Naive thymus-derived CD4-positive, alpha-beta T cell (primary cell): ENCODE measurements at regions of chr16 and their contacts with region 1.

Region 1: GRCh38 chr16:90022209-90023064 is 3.2 kb upstream of the DBNDD1 start:
- DNase-seq: peak; percentile 51 to 89 (median 71)
- ATAC-seq: peak; percentile 80
- H3K4me3 ChIP-seq: peak overlapping the region; percentile 73
- H3K4me3 Mint-ChIP-seq: peak overlapping the region; percentile 75 to 82 (median 80)
- H3K27ac ChIP-seq: peak overlapping the region; percentile 69
- H3K27ac Mint-ChIP-seq: peak overlapping the region; percentile 67 to 84 (median 79)
- H3K4me1 ChIP-seq: peaks cover 11 to 31% of the 10 kb centered on the region in 2 donors
- H3K4me1 Mint-ChIP-seq: peaks cover 15 to 37% (median 28%) of the 10 kb centered on the region in 7 donors
- H3K27me3 ChIP-seq: no peaks in the 10 kb centered on the region
- H3K27me3 Mint-ChIP-seq: peaks cover 0 to 21% (median 0%) of the 10 kb centered on the region in 5 donors

Region 2: DNA sequence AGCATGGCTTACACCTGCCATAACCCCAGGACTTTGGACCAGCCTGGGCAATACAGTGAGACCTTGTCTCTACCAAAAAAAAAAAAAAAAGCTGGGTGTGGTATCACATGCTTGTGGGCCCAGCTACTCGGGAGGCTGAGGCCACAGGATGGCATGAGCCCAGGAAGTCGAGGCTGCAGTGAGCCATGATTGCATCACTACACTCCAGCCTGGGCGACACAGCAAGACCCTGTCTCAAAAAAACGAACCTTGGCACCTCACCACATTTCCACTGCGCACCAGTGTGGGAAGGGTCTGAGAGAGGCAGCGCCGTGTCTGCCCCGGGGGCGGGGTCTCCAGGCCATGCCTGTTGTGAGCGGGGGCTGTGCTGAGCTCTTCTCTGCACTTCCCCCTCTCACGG is 922.5 kb before region 1 on chr16:
- CTCF ChIA-PET with region 1: no interaction called
- POLR2A ChIA-PET with region 1: no interaction called
- intact Hi-C with region 1: loop called in 1 of 2 experiments (anchors 5 kb)
- DNase-seq: no peak
- ATAC-seq: no peak
- H3K4me3 ChIP-seq: no peak overlapping the region
- H3K4me3 Mint-ChIP-seq: peak overlapping the region in 7 of 10 donors; percentile 20 to 96 (median 53)
- H3K27ac ChIP-seq: no peak overlapping the region
- H3K27ac Mint-ChIP-seq: peak overlapping the region; percentile 51 to 100 (median 83)
- H3K4me1 ChIP-seq: peaks cover 42 to 66% of the 10 kb centered on the region in 2 donors
- H3K4me1 Mint-ChIP-seq: peaks cover 46 to 84% (median 70%) of the 10 kb centered on the region in 7 donors
- H3K27me3 ChIP-seq: no peaks in the 10 kb centered on the region
- H3K27me3 Mint-ChIP-seq: no peaks in the 10 kb centered on the region

Region 3: DNA sequence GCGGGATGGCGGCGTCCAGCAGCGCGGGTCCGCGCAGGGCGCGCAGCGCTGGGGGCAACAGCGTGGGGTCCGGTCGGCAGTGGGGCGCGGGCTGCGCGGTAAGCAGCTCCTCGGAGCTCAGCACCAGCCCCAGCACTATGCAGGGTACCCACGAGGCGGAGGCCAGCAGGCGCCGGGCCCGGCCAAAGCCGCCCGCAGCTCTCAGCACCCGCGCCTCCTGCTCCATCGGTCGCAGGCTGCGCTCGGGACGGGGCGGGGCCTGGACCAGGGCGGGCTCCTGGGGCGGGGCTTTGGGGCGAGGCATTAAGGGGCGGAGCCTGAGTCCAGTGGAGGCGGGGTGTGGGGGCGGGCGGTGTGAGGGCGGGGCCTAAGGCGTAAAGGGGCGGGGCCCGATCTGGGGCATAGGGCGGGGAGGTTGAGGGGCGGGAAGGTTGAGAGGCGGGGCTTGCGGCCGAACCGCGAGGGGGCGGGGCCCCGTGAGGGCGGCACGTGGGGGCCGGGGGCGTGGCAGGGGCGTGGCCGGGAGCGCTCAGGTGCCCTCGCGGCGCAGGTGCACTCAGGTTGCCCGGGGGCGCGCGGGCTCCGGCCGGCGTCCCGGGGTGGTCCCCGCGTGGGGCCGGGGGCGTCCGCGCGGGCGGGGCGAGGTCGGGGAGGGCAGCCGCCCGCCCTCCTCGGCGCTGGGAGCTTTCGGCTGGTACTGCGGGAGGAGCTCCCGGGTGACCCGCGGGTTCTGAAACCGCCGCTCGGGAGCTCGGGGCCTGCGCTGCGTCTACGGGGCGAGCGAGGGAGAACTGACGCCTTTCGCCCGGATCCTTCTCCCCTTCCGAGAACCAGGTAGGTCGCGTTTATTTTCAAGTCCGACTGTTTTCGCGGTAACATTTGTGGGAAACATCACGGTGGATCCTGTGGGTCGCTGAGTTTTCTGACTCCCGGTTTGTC is 820.7 kb before region 1 on chr16:
- CTCF ChIA-PET with region 1: no interaction called
- POLR2A ChIA-PET with region 1: no interaction called
- intact Hi-C with region 1: no loop called
- DNase-seq: peak; percentile 62 to 89 (median 76)
- ATAC-seq: peak; percentile 94
- H3K4me3 ChIP-seq: no peak overlapping the region
- H3K4me3 Mint-ChIP-seq: peak overlapping the region; percentile 12 to 82 (median 74)
- H3K27ac ChIP-seq: no peak overlapping the region
- H3K27ac Mint-ChIP-seq: no peak overlapping the region
- H3K4me1 ChIP-seq: peaks cover 0 to 9% of the 10 kb centered on the region in 2 donors
- H3K4me1 Mint-ChIP-seq: peaks cover 0 to 22% (median 9%) of the 10 kb centered on the region in 7 donors
- H3K27me3 ChIP-seq: peaks cover 0 to 4% of the 10 kb centered on the region in 2 donors
- H3K27me3 Mint-ChIP-seq: peaks cover 22 to 47% (median 41%) of the 10 kb centered on the region in 5 donors

Region 4: GRCh38 chr16:89880477-89881367 is 141.7 kb before region 1 on chr16:
- CTCF ChIA-PET with region 1: no interaction called
- POLR2A ChIA-PET with region 1: no interaction called
- intact Hi-C with region 1: no loop called
- DNase-seq: no peak
- ATAC-seq: peak; percentile 26
- H3K4me3 ChIP-seq: no peak overlapping the region
- H3K4me3 Mint-ChIP-seq: no peak overlapping the region
- H3K27ac ChIP-seq: no peak overlapping the region
- H3K27ac Mint-ChIP-seq: peak overlapping the region in 1 of 9 donors; percentile 58
- H3K4me1 ChIP-seq: no peaks in the 10 kb centered on the region
- H3K4me1 Mint-ChIP-seq: peaks cover 2 to 27% (median 22%) of the 10 kb centered on the region in 7 donors
- H3K27me3 ChIP-seq: no peaks in the 10 kb centered on the region
- H3K27me3 Mint-ChIP-seq: no peaks in the 10 kb centered on the region

Region 5: DNA sequence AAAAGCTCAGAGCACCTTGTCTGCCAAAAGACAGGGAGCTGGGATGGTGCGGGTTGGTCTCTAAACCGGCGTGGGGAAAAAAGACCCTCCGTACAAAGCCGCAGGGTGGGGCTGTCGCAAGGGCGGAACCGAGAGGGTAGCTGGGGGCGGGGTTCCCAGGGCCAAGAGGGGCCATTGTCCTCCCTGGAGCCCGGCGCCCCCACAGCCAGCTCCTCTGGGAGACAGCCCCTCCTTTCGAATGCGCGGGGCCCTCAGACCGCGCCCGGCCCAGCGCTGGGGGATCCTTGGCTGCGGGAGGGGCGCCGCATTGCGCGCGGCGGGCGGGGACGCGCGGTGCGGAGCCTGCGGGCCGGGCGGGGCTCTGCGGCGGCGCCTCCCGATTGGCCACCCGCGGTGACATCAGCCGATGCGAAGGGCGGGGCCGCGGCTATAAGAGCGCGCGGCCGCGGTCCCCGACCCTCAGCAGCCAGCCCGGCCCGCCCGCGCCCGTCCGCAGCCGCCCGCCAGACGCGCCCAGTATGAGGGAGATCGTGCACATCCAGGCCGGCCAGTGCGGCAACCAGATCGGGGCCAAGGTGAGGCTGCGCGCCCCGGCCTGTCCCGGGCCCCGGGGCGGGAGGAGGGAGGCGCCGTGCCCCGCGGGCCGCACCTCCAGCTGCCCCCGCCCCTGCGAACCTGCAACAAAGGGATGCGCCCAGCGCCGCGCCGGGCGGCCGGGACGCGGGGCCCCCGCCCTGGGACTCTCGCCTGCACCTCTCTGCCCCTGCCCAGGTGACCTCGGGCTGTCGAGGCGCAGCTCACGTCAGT is 99.3 kb before region 1 on chr16 and contains the start of gene TUBB3:
- CTCF ChIA-PET with region 1: no interaction called
- POLR2A ChIA-PET with region 1: no interaction called
- intact Hi-C with region 1: loop called in 1 of 2 experiments (anchors 10 kb)
- DNase-seq: peak in 1 of 9 donors; percentile 82
- ATAC-seq: peak; percentile 31
- H3K4me3 ChIP-seq: no peak within 1 kb of the TSS
- H3K4me3 Mint-ChIP-seq: peak within 1 kb of the TSS in 8 of 10 donors; percentile 27 to 78 (median 46)
- H3K27ac ChIP-seq: no peak within 1 kb of the TSS
- H3K27ac Mint-ChIP-seq: peak within 1 kb of the TSS in 1 of 9 donors; percentile 68
- H3K4me1 ChIP-seq: peaks cover 8 to 15% of the 10 kb centered on the region in 2 donors
- H3K4me1 Mint-ChIP-seq: peaks cover 12 to 41% (median 32%) of the 10 kb centered on the region in 7 donors
- H3K27me3 ChIP-seq: peaks cover 4 to 15% of the 10 kb centered on the region in 2 donors
- H3K27me3 Mint-ChIP-seq: peaks cover 6 to 42% (median 20%) of the 10 kb centered on the region in 5 donors
- total RNA-seq, gene TUBB3: 0.48 to 2.8 TPM in 2 of 5 experiments, not detected in the others

Region 6: DNA sequence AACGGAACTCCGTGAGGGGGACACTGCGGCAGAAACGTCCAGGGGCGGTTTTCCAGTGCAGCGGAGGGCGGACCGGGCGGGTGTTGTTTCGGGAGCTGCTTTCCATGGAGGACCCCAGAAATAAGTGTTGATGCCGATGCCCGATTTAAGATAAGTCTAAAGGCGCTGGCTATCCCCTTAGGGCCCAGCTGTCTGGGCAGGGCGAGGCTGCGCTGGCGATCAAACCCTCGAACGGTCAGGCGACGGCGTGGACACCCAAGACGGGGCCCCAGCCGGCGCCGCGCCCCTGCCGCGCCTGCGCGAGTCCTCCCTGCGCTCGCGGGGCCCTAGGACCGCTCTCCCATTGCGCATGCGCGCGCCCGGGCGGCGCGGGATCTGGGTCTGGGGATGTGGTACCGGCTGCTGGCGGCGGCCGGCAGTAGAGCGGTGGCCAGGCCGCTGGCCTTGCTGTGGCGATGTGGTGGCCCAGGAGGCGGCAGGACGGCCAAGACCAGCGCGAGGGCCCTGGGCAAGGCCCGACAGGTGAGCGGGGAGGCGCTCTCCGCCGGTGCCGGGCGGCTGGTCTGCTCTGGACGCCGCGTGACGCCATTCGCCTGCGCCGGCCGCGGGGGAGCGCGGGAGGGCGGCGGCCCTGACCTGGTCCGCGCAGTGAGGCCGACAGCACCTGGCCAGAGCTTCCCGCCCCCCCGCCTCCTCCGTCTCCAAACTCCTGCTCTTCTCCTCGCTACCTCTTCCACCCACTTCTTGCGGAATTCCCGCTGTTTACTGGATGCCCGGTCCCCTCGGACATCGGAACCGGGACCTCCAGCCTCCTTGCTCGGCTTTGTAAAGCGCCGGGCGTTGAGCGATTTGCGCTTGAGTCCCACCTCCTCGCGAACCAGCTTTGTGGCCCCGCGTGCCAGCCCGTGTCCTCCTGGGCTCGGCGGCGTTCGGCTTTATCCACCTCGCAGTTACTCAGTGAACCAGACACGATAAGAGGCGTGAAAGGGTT is 49.9 kb before region 1 on chr16:
- CTCF ChIA-PET with region 1: interaction called, 4 read pairs
- POLR2A ChIA-PET with region 1: no interaction called
- intact Hi-C with region 1: loop called (anchors 1 to 5 kb)
- DNase-seq: peak; percentile 86 to 97 (median 92)
- ATAC-seq: peak; percentile 96
- H3K4me3 ChIP-seq: peak overlapping the region; percentile 97
- H3K4me3 Mint-ChIP-seq: peak overlapping the region; percentile 96 to 100 (median 99)
- H3K27ac ChIP-seq: peak overlapping the region; percentile 82
- H3K27ac Mint-ChIP-seq: peak overlapping the region; percentile 89 to 99 (median 96)
- H3K4me1 ChIP-seq: peaks cover 12 to 22% of the 10 kb centered on the region in 2 donors
- H3K4me1 Mint-ChIP-seq: peaks cover 13 to 45% (median 30%) of the 10 kb centered on the region in 7 donors
- H3K27me3 ChIP-seq: no peaks in the 10 kb centered on the region
- H3K27me3 Mint-ChIP-seq: peaks cover 0 to 2% (median 0%) of the 10 kb centered on the region in 5 donors